Naive thymus-derived CD4-positive, alpha-beta T cell (primary cell): ENCODE measurements at regions of chr5 and their contacts with region 1.

Region 1: DNA sequence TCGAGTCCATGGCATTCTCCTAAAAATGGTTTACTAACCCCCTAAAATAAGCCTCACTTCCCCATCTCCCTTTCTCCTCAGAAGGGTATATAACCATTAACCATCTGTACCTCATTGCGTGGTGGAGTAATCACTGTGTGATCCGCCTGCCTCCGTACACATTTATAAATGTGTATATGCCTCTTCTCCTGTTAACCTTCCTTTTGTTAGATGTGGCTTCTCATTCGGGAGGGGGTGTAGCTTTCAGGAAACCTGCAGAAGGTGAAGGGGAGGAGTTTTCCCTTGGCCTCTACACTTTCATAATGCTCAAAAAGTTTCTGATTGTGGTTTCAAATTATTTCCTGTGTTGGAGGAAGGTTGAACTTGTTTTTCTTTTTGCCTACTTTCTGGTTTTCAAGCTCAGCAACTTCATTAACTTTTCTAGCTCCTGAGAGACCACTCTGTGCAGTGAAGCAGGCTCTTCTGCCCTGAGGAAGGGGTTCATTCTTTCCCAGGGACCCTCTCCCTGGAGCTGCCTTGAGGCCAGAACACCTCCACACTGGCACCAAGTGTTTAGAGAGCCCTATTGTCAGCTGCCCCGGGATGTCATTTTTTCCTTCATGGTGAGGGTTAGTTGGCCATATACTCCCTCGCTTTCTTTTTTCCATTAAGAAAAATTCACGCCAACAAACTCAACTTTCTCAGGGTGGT is 46.9 kb downstream of the RASGRF2 start:
- DNase-seq: peak in 8 of 9 donors; percentile 48 to 91 (median 88)
- ATAC-seq: peak; percentile 95
- H3K4me3 ChIP-seq: peak overlapping the region; percentile 53
- H3K4me3 Mint-ChIP-seq: peak overlapping the region; percentile 75 to 95 (median 89)
- H3K27ac ChIP-seq: peak overlapping the region; percentile 80
- H3K27ac Mint-ChIP-seq: peak overlapping the region; percentile 92 to 100 (median 95)
- H3K4me1 ChIP-seq: peaks cover 35 to 64% of the 10 kb centered on the region in 2 donors
- H3K4me1 Mint-ChIP-seq: peaks cover 45 to 93% (median 80%) of the 10 kb centered on the region in 7 donors
- H3K27me3 ChIP-seq: no peaks in the 10 kb centered on the region
- H3K27me3 Mint-ChIP-seq: no peaks in the 10 kb centered on the region

Region 2: DNA sequence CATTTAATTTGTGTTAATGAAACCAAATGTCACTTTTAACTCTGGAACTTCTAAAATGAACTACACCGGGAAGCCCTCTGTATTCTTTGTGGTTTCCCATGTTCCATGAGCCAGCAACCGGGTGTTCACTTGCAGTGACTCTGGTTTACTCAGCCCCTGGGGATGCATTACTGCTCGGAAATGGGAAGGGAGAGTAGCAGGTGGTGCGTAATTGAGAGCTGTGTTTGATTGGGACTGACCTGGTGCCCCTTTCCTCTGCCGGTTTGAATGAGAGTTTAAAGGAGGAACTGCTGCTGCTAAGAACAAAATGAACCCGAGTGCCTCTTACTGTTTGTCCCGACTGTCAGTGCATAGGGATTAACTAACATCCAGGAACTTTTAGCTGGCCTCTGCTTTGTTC is 252.2 kb before region 1 on chr5:
- CTCF ChIA-PET with region 1: no interaction called
- POLR2A ChIA-PET with region 1: no interaction called
- intact Hi-C with region 1: loop called in 1 of 2 experiments (anchors 1 kb)
- DNase-seq: peak in 2 of 9 donors; percentile 11 to 49
- ATAC-seq: no peak
- H3K4me3 ChIP-seq: peak overlapping the region; percentile 7
- H3K4me3 Mint-ChIP-seq: peak overlapping the region; percentile 49 to 87 (median 78)
- H3K27ac ChIP-seq: peak overlapping the region; percentile 57
- H3K27ac Mint-ChIP-seq: peak overlapping the region; percentile 45 to 93 (median 79)
- H3K4me1 ChIP-seq: peaks cover 20 to 28% of the 10 kb centered on the region in 2 donors
- H3K4me1 Mint-ChIP-seq: peaks cover 30 to 61% (median 47%) of the 10 kb centered on the region in 7 donors
- H3K27me3 ChIP-seq: no peaks in the 10 kb centered on the region
- H3K27me3 Mint-ChIP-seq: no peaks in the 10 kb centered on the region

Region 3: GRCh38 chr5:80837679-80838078 is 169.4 kb before region 1 on chr5:
- CTCF ChIA-PET with region 1: no interaction called
- POLR2A ChIA-PET with region 1: no interaction called
- intact Hi-C with region 1: no loop called
- DNase-seq: no peak
- ATAC-seq: peak; percentile 51
- H3K4me3 ChIP-seq: no peak overlapping the region
- H3K4me3 Mint-ChIP-seq: no peak overlapping the region
- H3K27ac ChIP-seq: no peak overlapping the region
- H3K27ac Mint-ChIP-seq: peak overlapping the region in 1 of 9 donors; percentile 61
- H3K4me1 ChIP-seq: no peaks in the 10 kb centered on the region
- H3K4me1 Mint-ChIP-seq: peaks cover 0 to 25% (median 2%) of the 10 kb centered on the region in 7 donors
- H3K27me3 ChIP-seq: no peaks in the 10 kb centered on the region
- H3K27me3 Mint-ChIP-seq: no peaks in the 10 kb centered on the region

Region 4: DNA sequence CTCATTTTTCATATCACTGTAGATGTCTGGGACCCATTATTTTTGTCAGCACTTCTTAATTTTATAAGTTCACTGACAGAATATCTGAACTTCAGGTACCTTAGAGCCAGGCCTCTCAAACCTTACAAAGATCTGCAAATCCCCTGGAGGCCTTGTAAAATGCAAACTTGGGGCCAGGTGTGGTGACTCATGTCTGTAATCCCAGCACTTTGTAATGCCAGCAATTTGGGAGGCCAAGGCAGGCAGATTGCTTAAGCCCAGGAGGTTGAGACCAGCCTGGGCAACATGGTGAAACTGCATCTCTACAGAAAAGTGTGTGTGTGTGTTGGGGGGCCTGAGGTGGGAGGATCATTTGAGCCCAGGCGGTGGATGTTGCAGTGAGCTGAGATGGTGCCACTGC is 16.1 kb before region 1 on chr5:
- CTCF ChIA-PET with region 1: interaction called, 3 read pairs
- POLR2A ChIA-PET with region 1: interaction called, 10 read pairs
- intact Hi-C with region 1: loop called in 1 of 2 experiments (anchors 2 kb)
- DNase-seq: no peak
- ATAC-seq: no peak
- H3K4me3 ChIP-seq: no peak overlapping the region
- H3K4me3 Mint-ChIP-seq: peak overlapping the region in 3 of 10 donors; percentile 7 to 24 (median 18)
- H3K27ac ChIP-seq: no peak overlapping the region
- H3K27ac Mint-ChIP-seq: peak overlapping the region in 1 of 9 donors; percentile 54
- H3K4me1 ChIP-seq: peaks cover 0 to 55% of the 10 kb centered on the region in 2 donors
- H3K4me1 Mint-ChIP-seq: peaks cover 34 to 91% (median 85%) of the 10 kb centered on the region in 7 donors
- H3K27me3 ChIP-seq: no peaks in the 10 kb centered on the region
- H3K27me3 Mint-ChIP-seq: no peaks in the 10 kb centered on the region

Region 5: GRCh38 chr5:81020478-81021174 is 13.5 kb after region 1 on chr5:
- CTCF ChIA-PET with region 1: interaction called, 3 read pairs
- POLR2A ChIA-PET with region 1: interaction called, 16 read pairs
- intact Hi-C with region 1: loop called in 1 of 2 experiments (anchors 1 kb)
- DNase-seq: no peak
- ATAC-seq: no peak
- H3K4me3 ChIP-seq: no peak overlapping the region
- H3K4me3 Mint-ChIP-seq: peak overlapping the region in 7 of 10 donors; percentile 1 to 51 (median 15)
- H3K27ac ChIP-seq: no peak overlapping the region
- H3K27ac Mint-ChIP-seq: peak overlapping the region in 5 of 9 donors; percentile 49 to 93 (median 70)
- H3K4me1 ChIP-seq: peaks cover 12 to 62% of the 10 kb centered on the region in 2 donors
- H3K4me1 Mint-ChIP-seq: peaks cover 53 to 97% (median 91%) of the 10 kb centered on the region in 7 donors
- H3K27me3 ChIP-seq: no peaks in the 10 kb centered on the region
- H3K27me3 Mint-ChIP-seq: no peaks in the 10 kb centered on the region

Region 6: GRCh38 chr5:81045389-81045807 is 38.3 kb after region 1 on chr5:
- CTCF ChIA-PET with region 1: interaction called, 5 read pairs
- POLR2A ChIA-PET with region 1: interaction called, 5 read pairs
- intact Hi-C with region 1: loop called in 1 of 2 experiments (anchors 1 kb)
- DNase-seq: no peak
- ATAC-seq: no peak
- H3K4me3 ChIP-seq: no peak overlapping the region
- H3K4me3 Mint-ChIP-seq: no peak overlapping the region
- H3K27ac ChIP-seq: no peak overlapping the region
- H3K27ac Mint-ChIP-seq: peak overlapping the region in 3 of 9 donors; percentile 5 to 38 (median 23)
- H3K4me1 ChIP-seq: peaks cover 0 to 11% of the 10 kb centered on the region in 2 donors
- H3K4me1 Mint-ChIP-seq: peaks cover 11 to 92% (median 73%) of the 10 kb centered on the region in 7 donors
- H3K27me3 ChIP-seq: no peaks in the 10 kb centered on the region
- H3K27me3 Mint-ChIP-seq: no peaks in the 10 kb centered on the region

Region 7: DNA sequence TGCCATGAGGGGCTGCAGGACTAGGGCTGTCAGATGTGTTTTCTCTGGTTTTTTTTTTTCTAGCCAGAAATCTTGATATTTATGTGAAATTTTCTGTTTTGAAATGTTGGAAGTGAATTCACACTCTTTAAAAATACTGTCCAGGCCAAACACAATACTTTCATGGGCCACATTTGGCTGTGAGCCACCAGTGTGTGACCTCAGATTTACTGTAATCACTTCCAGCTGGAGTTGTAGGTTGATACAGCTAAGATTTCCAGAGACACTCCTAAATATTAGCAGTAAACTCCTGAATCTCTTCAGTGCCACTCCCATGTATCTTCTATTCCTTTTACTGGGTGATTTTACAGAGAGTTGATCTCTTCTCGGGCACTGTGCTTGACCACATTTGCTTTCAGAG is 133.9 kb after region 1 on chr5:
- CTCF ChIA-PET with region 1: no interaction called
- POLR2A ChIA-PET with region 1: no interaction called
- intact Hi-C with region 1: no loop called
- DNase-seq: no peak
- ATAC-seq: no peak
- H3K4me3 ChIP-seq: no peak overlapping the region
- H3K4me3 Mint-ChIP-seq: no peak overlapping the region
- H3K27ac ChIP-seq: no peak overlapping the region
- H3K27ac Mint-ChIP-seq: no peak overlapping the region
- H3K4me1 ChIP-seq: no peaks in the 10 kb centered on the region
- H3K4me1 Mint-ChIP-seq: peaks cover 0 to 27% (median 8%) of the 10 kb centered on the region in 7 donors
- H3K27me3 ChIP-seq: no peaks in the 10 kb centered on the region
- H3K27me3 Mint-ChIP-seq: no peaks in the 10 kb centered on the region

Region 8: DNA sequence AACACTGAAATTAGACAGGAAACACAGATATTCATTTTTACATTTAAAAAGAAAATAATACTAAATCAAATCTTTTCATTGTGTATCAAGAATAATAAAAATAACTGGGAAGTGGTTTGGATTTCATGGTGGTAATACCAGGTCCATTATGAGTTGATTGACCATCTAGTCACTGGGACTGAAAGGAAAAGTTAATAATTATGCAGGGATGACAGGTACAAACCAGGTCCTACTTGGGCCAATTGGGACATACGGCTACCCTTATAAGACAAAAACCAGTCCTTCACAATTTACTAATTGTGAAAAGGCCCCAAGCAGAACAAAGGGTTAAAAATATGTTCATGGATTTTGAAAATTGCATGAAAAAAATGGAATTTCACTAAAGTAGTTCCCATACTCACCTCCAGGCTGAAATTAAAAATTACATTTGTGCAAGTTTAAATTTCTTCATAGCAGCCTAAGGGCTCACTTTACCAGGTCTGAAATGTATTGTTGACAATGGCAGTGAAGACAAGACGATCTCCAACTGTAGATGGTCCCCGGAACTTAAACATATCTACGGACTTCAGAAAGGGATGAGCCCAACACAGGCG is 338.4 kb after region 1 on chr5:
- CTCF ChIA-PET with region 1: no interaction called
- POLR2A ChIA-PET with region 1: no interaction called
- intact Hi-C with region 1: no loop called
- DNase-seq: no peak
- ATAC-seq: no peak
- H3K4me3 ChIP-seq: no peak overlapping the region
- H3K4me3 Mint-ChIP-seq: no peak overlapping the region
- H3K27ac ChIP-seq: no peak overlapping the region
- H3K27ac Mint-ChIP-seq: no peak overlapping the region
- H3K4me1 ChIP-seq: no peaks in the 10 kb centered on the region
- H3K4me1 Mint-ChIP-seq: no peaks in the 10 kb centered on the region
- H3K27me3 ChIP-seq: no peaks in the 10 kb centered on the region
- H3K27me3 Mint-ChIP-seq: peaks cover 0 to 3% (median 0%) of the 10 kb centered on the region in 5 donors

Region 9: DNA sequence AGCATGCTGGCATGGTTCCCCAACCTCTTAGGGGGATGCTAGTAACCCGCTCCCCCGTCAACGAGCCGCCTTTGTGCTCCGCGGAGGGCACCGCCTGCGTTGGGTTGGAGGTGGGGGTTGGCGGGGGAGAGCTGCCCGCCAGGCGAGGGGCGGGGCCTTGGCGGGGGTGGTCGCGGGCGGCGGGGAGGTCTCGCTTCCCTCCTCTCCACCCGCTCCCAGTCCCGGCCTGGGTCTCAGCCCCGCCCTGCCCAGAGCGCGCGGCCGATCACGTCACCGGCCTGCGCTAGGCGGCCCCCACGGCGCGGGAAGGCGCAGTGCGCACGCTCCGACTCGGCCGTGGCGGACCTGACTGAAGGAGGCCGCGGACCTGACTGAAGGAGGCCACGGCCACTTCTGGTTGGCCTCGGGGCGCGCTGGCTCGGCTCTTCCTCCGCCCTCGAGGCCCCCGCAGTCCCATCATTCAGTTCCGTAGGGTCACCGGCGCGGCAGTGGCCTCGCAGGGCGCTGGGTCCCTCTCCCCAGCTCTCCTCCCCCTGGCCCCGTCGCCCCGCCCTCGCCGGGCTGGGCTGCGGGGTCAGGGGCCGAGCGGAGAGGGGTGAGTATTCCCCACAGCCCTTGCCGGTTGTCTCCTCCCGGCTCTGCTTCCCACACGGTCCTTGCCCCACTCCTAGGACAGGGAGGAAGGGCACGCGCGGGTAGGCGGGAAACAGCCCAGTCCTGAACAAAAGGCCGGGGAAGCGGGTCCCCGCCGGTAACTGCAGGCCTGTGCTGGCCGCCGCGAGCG is 964.8 kb after region 1 on chr5 and contains the start of gene ATG10:
- CTCF ChIA-PET with region 1: no interaction called
- POLR2A ChIA-PET with region 1: no interaction called
- intact Hi-C with region 1: no loop called
- DNase-seq: peak; percentile 78 to 93 (median 84)
- ATAC-seq: peak; percentile 95
- H3K4me3 ChIP-seq: peak within 1 kb of the TSS; percentile 67
- H3K4me3 Mint-ChIP-seq: peak within 1 kb of the TSS; percentile 91 to 100 (median 97)
- H3K27ac ChIP-seq: peak within 1 kb of the TSS; percentile 97
- H3K27ac Mint-ChIP-seq: peak within 1 kb of the TSS; percentile 95 to 99 (median 99)
- H3K4me1 ChIP-seq: peaks cover 5 to 10% of the 10 kb centered on the region in 2 donors
- H3K4me1 Mint-ChIP-seq: peaks cover 9 to 40% (median 33%) of the 10 kb centered on the region in 7 donors
- H3K27me3 ChIP-seq: no peaks in the 10 kb centered on the region
- H3K27me3 Mint-ChIP-seq: no peaks in the 10 kb centered on the region
- total RNA-seq, gene ATG10: 6.4 to 9.6 (median 8.2) TPM